ENCODE measurements at regions of chr16 and their contacts with region 1.

Region 1: GRCh38 chr16:24516900-24517669 is 22.3 kb upstream of the RBBP6 start:
- DNase-seq: peak; percentile 71
- H3K4me3 ChIP-seq: no peak overlapping the region
- H3K27ac ChIP-seq: no peak overlapping the region
- H3K4me1 ChIP-seq: no peaks in the 10 kb centered on the region
- H3K27me3 ChIP-seq: no peaks in the 10 kb centered on the region
- CTCF ChIP-seq: peak; percentile 93 to 95

Region 2: DNA sequence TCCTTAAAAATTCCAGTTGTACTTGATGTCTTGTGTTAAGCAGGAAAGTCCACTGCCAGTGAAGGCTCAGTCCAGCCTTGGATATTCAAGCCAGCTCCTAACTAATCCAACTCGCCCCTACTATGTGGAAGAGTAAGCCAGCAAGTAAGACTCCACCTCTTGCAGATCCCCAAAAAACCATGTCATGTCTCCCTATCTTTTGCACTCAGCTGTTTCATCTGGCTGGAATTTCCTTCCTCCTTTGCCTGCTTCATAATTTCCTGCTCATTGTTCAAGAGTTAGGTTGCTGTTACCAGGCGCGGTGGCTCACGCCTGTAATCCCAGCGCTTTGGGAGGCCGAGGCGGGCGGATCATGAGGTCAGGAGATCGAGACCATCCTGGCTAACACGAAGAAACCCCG is 60.1 kb after region 1 on chr16:
- CTCF ChIA-PET with region 1: no interaction called
- dilution Hi-C with region 1: no loop called
- in situ Hi-C with region 1: no loop called
- intact Hi-C with region 1: no loop called
- DNase-seq: no peak
- H3K4me3 ChIP-seq: no peak overlapping the region
- H3K27ac ChIP-seq: no peak overlapping the region
- H3K4me1 ChIP-seq: no peaks in the 10 kb centered on the region
- H3K27me3 ChIP-seq: no peaks in the 10 kb centered on the region
- CTCF ChIP-seq: no peak

Region 3: GRCh38 chr16:24689145-24689544 is 172.1 kb after region 1 on chr16:
- CTCF ChIA-PET with region 1: no interaction called
- dilution Hi-C with region 1: no loop called
- in situ Hi-C with region 1: no loop called
- intact Hi-C with region 1: loop called (anchors 2 kb)
- DNase-seq: no peak
- H3K4me3 ChIP-seq: no peak overlapping the region
- H3K27ac ChIP-seq: no peak overlapping the region
- H3K4me1 ChIP-seq: peaks cover 11% of the 10 kb centered on the region
- H3K27me3 ChIP-seq: no peaks in the 10 kb centered on the region
- CTCF ChIP-seq: peak; percentile 49 to 53

Measured in mammary epithelial cell (primary cell).